ENCODE measurements at regions of chr2 and their contacts with region 1.

Region 1: DNA sequence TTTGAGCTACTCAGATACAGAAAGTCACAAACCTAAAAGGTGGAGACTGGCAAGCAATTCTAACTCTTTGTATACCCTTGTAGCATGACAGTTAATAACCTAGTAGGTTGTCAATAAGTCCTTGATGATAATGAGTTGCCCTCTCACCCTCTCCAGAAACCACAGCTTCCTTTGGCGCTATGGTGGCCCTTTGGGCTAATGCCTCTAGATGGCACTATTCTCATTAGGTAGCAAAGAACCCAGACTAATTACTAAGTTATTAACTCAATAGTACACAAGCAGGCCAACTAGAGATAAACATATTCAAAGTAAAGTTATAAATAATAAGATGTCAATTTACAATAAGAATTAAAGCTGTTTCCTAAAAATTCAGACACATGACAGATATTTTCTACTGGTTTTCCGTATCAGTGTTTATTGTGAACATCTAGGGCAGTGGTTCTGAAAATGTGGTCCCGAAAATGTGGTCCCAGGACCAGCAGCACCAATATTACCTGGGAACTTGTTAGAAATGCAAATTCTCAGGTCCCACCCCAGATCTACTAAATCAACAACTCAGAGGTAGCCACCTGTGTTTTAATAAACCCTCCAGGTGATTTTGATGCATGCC is 41.1 kb downstream of the LDAH start:
- DNase-seq: peak; percentile 22
- H3K4me3 Mint-ChIP-seq: no peak overlapping the region
- H3K27ac Mint-ChIP-seq: no peak overlapping the region
- H3K4me1 Mint-ChIP-seq: no peaks in the 10 kb centered on the region
- H3K27me3 Mint-ChIP-seq: no peaks in the 10 kb centered on the region

Region 2: DNA sequence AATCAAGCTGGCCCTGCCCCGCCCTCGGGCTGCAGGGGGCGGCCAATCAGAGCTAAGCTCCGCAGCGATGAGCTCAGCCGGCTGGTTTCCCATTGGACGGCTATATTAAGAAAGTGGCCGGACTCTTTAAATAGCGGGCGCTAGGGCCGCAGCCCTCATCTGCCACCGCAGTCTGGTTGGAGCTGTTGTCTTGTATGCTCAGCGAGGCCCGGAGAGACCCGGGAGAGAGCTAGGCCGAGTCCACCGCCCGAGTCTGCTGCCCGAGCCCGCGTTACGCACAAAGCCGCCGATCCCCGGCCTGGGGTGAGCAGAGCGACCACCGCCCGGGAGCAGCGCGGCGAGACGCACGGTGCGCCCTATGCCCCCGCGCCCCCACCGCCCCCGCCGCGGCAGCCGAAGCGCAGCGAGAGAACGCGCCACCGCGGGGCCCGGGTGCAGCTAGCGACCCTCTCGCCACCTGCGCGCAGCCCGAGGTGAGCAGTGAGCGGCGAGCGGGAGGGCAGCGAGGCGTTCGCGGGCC is 334.8 kb before region 1 on chr2 and contains the start of gene RHOB:
- CTCF ChIA-PET with region 1: no interaction called
- DNase-seq: peak; percentile 92
- H3K4me3 Mint-ChIP-seq: peak within 1 kb of the TSS; percentile 73
- H3K27ac Mint-ChIP-seq: no peak within 1 kb of the TSS
- H3K4me1 Mint-ChIP-seq: peaks cover 6% of the 10 kb centered on the region
- H3K27me3 Mint-ChIP-seq: peaks cover 74% of the 10 kb centered on the region

Region 3: GRCh38 chr2:20755132-20755800 is 26.5 kb before region 1 on chr2:
- CTCF ChIA-PET with region 1: no interaction called
- DNase-seq: no peak
- H3K4me3 Mint-ChIP-seq: no peak overlapping the region
- H3K27ac Mint-ChIP-seq: no peak overlapping the region
- H3K4me1 Mint-ChIP-seq: no peaks in the 10 kb centered on the region
- H3K27me3 Mint-ChIP-seq: no peaks in the 10 kb centered on the region

Region 4: DNA sequence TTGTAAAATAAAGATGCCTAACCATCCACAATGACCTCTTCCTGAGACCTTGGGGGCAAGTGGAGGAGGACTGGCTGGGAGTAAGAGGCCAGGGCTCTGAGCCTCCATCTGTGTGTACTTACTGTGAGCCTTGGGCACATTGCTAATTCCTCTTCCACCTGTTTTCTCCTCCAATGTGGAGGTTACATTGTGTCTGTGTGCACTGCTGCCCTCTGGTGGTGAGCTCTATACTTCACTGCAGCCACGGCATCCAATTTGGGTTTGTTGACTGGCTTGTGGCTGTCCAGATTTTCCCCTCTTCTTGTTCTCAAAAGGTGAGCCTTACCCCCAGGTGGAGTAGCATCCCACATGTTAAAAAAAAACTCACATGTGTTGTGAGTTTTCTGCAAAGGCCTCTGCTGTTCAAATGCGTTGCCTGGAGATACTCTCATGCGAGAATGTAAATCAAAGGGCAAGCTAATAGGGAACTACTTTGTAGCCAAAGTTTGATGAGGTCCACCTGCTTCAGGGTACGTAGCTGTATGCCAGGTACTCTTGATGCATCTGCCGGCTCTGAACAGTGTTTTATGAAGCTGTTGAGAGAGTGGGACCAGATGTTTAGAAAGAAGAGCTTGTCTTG is 181.3 kb after region 1 on chr2:
- CTCF ChIA-PET with region 1: interaction called, 47 read pairs
- DNase-seq: peak; percentile 80
- H3K4me3 Mint-ChIP-seq: no peak overlapping the region
- H3K27ac Mint-ChIP-seq: no peak overlapping the region
- H3K4me1 Mint-ChIP-seq: no peaks in the 10 kb centered on the region
- H3K27me3 Mint-ChIP-seq: peaks cover 26% of the 10 kb centered on the region

Measured in activated naive CD4-positive, alpha-beta T cell treated with anti-CD3 and anti-CD28 coated beads, Interleukin-2, amount 10 ng/mL, durations not matched to agents 7 days and 5 days (primary cell).